ENCODE measurements at regions of chr17 and their contacts with region 1.

Region 1: GRCh38 chr17:14926526-14927122 is 338.5 kb downstream of the PMP22 start:
- H3K4me3 Mint-ChIP-seq: no peak overlapping the region
- H3K27ac Mint-ChIP-seq: no peak overlapping the region
- H3K4me1 Mint-ChIP-seq: no peaks in the 10 kb centered on the region
- H3K27me3 Mint-ChIP-seq: no peaks in the 10 kb centered on the region

Region 2: DNA sequence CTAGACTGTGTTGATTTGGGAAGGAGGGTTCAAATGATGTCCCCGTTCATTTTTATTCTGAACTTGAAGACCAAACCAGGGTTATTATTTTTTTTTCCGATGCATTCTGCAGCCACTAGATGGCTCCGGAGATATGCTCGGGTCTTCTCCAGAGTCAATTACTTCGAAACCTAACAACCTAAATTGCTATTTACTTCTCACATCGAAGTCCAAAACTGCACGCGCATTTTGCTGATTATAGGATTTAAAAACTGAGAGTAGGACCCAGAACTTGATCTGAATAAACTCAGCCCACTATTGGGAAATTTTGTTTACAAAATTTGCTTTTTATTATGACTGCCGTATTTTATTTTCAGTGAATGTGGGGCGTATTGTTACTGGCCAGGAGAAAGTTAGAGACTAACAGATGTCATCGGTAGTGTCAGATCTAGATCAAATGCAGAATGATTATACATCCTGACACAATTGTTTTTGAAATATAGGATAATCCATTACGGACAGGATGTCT is 1588.7 kb before region 1 on chr17:
- intact Hi-C with region 1: loop called (anchors 5 kb)
- H3K4me3 Mint-ChIP-seq: no peak overlapping the region
- H3K27ac Mint-ChIP-seq: no peak overlapping the region
- H3K4me1 Mint-ChIP-seq: no peaks in the 10 kb centered on the region
- H3K27me3 Mint-ChIP-seq: peaks cover 7% of the 10 kb centered on the region

Region 3: GRCh38 chr17:14211801-14212200 is 714.8 kb before region 1 on chr17:
- intact Hi-C with region 1: loop called (anchors 2 kb)
- H3K4me3 Mint-ChIP-seq: no peak overlapping the region
- H3K27ac Mint-ChIP-seq: no peak overlapping the region
- H3K4me1 Mint-ChIP-seq: peaks cover 29% of the 10 kb centered on the region
- H3K27me3 Mint-ChIP-seq: peaks cover 2% of the 10 kb centered on the region

Region 4: GRCh38 chr17:14775731-14776492 is 150.7 kb before region 1 on chr17:
- intact Hi-C with region 1: loop called (anchors 5 kb)
- H3K4me3 Mint-ChIP-seq: no peak overlapping the region
- H3K27ac Mint-ChIP-seq: no peak overlapping the region
- H3K4me1 Mint-ChIP-seq: peaks cover 41% of the 10 kb centered on the region
- H3K27me3 Mint-ChIP-seq: no peaks in the 10 kb centered on the region

Measured in dendritic cell treated with granulocyte-macrophage colony-stimulating factor and Interleukin-4, amounts not matched to agents 40 ng/mL and 50 ng/mL, for 4 days (primary cell).